ENCODE measurements at regions of chr3 and their contacts with region 1.

Region 1: GRCh38 chr3:2156244-2156847 is 57.7 kb downstream of the CNTN4 start:
- DNase-seq: peak; percentile 47 to 67 (median 58)
- ATAC-seq: peak; percentile 78
- H3K4me3 ChIP-seq: no peak overlapping the region
- H3K27ac ChIP-seq: no peak overlapping the region
- H3K4me1 ChIP-seq: no peaks in the 10 kb centered on the region
- H3K27me3 ChIP-seq: no peaks in the 10 kb centered on the region
- CTCF ChIP-seq: peak; percentile 51 to 77 (median 52)
- EP300 ChIP-seq: no peak
- POLR2A ChIP-seq: no peak
- RAD21 ChIP-seq: peak; percentile 11 to 57; a peak in 3 of 4 replicates

Region 2: GRCh38 chr3:632572-633170 is 1523.7 kb before region 1 on chr3:
- CTCF ChIA-PET with region 1: no interaction called
- POLR2A ChIA-PET with region 1: no interaction called
- in situ Hi-C with region 1: no loop called
- intact Hi-C with region 1: loop called (anchors 10 kb)
- DNase-seq: peak; percentile 18 to 71 (median 48)
- ATAC-seq: peak; percentile 73
- H3K4me3 ChIP-seq: no peak overlapping the region
- H3K27ac ChIP-seq: no peak overlapping the region
- H3K4me1 ChIP-seq: no peaks in the 10 kb centered on the region
- H3K27me3 ChIP-seq: no peaks in the 10 kb centered on the region
- CTCF ChIP-seq: peak; percentile 16 to 65 (median 62); a peak in 5 of 6 replicates
- EP300 ChIP-seq: no peak
- POLR2A ChIP-seq: no peak
- RAD21 ChIP-seq: peak; percentile 71 to 86

Region 3: DNA sequence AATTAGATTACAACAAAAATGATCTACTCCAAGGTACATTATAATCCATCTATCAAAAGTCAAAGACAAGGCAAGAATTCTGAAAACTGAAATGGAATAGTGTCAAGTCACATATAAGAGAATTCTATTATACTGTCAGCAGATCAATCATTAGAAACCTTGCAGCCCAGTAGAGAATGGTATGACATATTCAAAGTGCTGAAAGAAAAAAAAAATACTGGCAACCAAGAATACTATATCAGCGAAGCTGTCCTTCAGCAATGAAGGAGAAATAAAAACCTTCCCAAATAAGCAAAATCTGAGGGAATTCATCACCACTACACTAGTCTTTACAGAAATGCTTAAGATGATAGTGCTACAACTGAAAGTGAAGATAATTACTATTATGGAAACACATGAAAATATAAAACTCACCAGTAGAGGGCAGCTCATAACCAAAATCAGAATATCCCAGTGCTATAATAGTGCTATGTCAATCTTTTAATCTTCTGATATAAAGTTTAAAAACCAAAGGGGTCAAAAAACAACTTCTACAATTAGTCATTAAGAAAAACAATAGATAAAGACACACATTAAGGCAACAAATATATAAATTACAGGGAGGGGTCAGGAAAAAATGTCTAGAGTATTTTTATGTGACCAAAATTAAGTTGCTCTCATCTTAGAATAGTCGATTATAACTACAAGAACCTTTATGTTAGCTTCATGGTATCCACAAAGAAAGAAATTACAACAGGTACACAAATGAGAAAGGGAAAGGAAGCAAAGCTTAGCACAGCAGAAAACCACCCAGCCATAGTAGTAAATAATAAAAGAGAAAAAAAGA is 1254.2 kb before region 1 on chr3:
- CTCF ChIA-PET with region 1: no interaction called
- POLR2A ChIA-PET with region 1: no interaction called
- in situ Hi-C with region 1: no loop called
- intact Hi-C with region 1: loop called (anchors 10 kb)
- DNase-seq: peak; percentile 8 to 30 (median 26)
- ATAC-seq: peak; percentile 73; the same call in 2 of the 3 replicates
- H3K4me3 ChIP-seq: no peak overlapping the region
- H3K27ac ChIP-seq: no peak overlapping the region
- H3K4me1 ChIP-seq: no peaks in the 10 kb centered on the region
- H3K27me3 ChIP-seq: no peaks in the 10 kb centered on the region
- CTCF ChIP-seq: peak in 1 of 3 experiments; percentile 55; a peak in 2 of 6 replicates
- EP300 ChIP-seq: no peak
- POLR2A ChIP-seq: no peak
- RAD21 ChIP-seq: peak; percentile 6 to 67; a peak in 2 of 4 replicates

Region 4: GRCh38 chr3:2141482-2141881 is 14.9 kb before region 1 on chr3:
- CTCF ChIA-PET with region 1: no interaction called
- POLR2A ChIA-PET with region 1: no interaction called
- in situ Hi-C with region 1: no loop called
- intact Hi-C with region 1: no loop called
- DNase-seq: no peak
- ATAC-seq: no peak
- H3K4me3 ChIP-seq: no peak overlapping the region
- H3K27ac ChIP-seq: no peak overlapping the region
- H3K4me1 ChIP-seq: no peaks in the 10 kb centered on the region
- H3K27me3 ChIP-seq: no peaks in the 10 kb centered on the region
- CTCF ChIP-seq: no peak
- EP300 ChIP-seq: no peak
- POLR2A ChIP-seq: no peak
- RAD21 ChIP-seq: no peak

Region 5: DNA sequence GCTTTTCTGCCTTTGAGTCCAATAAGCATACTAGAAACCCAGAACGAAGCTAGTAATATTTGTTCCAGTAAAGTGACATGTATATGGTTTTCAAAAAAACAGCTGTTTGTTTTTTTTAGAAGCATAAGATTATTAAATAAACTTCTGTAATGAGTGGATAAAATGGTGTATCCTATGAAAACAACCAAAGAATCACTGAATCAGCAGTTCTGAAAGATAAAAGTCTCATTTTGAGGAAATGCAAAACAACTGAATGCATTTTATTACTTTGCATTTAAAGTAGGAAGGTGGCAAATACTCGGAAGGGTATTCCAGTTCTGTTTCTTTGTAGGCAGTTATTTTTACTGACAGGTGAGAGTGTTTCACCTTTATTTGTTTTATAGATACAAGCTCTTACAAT is 49.3 kb after region 1 on chr3:
- CTCF ChIA-PET with region 1: no interaction called
- POLR2A ChIA-PET with region 1: no interaction called
- in situ Hi-C with region 1: no loop called
- intact Hi-C with region 1: no loop called
- DNase-seq: no peak
- ATAC-seq: no peak
- H3K4me3 ChIP-seq: no peak overlapping the region
- H3K27ac ChIP-seq: no peak overlapping the region
- H3K4me1 ChIP-seq: no peaks in the 10 kb centered on the region
- H3K27me3 ChIP-seq: no peaks in the 10 kb centered on the region
- CTCF ChIP-seq: no peak
- EP300 ChIP-seq: no peak
- POLR2A ChIP-seq: no peak
- RAD21 ChIP-seq: no peak